ENCODE measurements at regions of chr11 and their contacts with region 1.

Region 1: GRCh38 chr11:65625628-65626342 is 10.2 kb downstream of the PCNX3 start:
- DNase-seq: peak in 8 of 9 donors; percentile 42 to 68 (median 54)
- ATAC-seq: peak; percentile 92
- H3K4me3 ChIP-seq: no peak overlapping the region
- H3K4me3 Mint-ChIP-seq: peak overlapping the region in 1 of 10 donors; percentile 41
- H3K27ac ChIP-seq: no peak overlapping the region
- H3K27ac Mint-ChIP-seq: peak overlapping the region in 4 of 9 donors; percentile 22 to 86 (median 68)
- H3K4me1 ChIP-seq: peaks cover 3 to 9% of the 10 kb centered on the region in 2 donors
- H3K4me1 Mint-ChIP-seq: peaks cover 4 to 13% (median 7%) of the 10 kb centered on the region in 7 donors
- H3K27me3 ChIP-seq: no peaks in the 10 kb centered on the region
- H3K27me3 Mint-ChIP-seq: no peaks in the 10 kb centered on the region

Region 2: DNA sequence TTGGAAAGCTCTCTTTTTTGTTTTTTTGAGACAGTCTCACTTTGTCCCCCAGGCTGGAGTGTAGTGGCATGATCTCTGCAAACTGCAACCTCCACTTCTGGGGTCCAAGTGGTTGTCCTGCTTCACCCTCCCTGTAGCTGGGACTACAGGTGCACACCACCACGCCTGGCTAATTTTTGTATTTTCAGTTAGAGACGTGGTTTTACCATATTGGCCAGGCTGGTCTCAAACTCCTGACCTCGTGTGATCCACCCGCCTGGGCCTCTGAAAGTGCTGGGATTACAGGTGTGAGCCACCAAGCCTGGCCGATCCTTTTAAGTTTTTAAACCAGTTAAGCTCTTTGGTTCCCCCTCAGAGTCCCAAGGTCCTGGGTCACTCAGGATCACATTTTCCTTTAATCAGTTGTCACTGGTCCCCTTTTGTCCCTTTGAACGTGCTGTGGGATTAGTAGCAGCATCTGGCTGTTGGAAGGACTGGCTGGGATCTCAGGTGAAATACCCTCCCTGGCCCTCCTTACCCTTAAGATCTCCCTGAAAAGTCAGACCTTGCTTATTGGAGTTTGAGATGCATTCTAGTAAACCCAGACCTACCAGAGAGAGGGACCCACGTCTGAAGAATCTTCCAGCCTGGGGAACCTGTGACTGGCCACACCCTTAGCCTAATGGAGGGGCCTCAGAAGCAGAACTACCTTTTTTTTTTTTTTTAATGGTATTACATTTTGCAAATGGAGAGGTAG is 118.8 kb before region 1 on chr11:
- CTCF ChIA-PET with region 1: no interaction called
- POLR2A ChIA-PET with region 1: no interaction called
- intact Hi-C with region 1: no loop called
- DNase-seq: peak in 7 of 9 donors; percentile 40 to 65 (median 58)
- ATAC-seq: peak; percentile 57
- H3K4me3 ChIP-seq: peak overlapping the region; percentile 99
- H3K4me3 Mint-ChIP-seq: no peak overlapping the region
- H3K27ac ChIP-seq: peak overlapping the region; percentile 99
- H3K27ac Mint-ChIP-seq: peak overlapping the region in 8 of 9 donors; percentile 78 to 92 (median 88)
- H3K4me1 ChIP-seq: peaks cover 35 to 38% of the 10 kb centered on the region in 2 donors
- H3K4me1 Mint-ChIP-seq: peaks cover 46 to 56% (median 49%) of the 10 kb centered on the region in 7 donors
- H3K27me3 ChIP-seq: no peaks in the 10 kb centered on the region
- H3K27me3 Mint-ChIP-seq: peaks cover 0 to 4% (median 0%) of the 10 kb centered on the region in 5 donors

Region 3: GRCh38 chr11:65637794-65638317 is 12.1 kb after region 1 on chr11 and contains the start of gene SIPA1:
- CTCF ChIA-PET with region 1: interaction called, 9 read pairs
- POLR2A ChIA-PET with region 1: interaction called, 22 read pairs
- intact Hi-C with region 1: no loop called
- DNase-seq: peak; percentile 57 to 93 (median 74)
- ATAC-seq: peak; percentile 62
- H3K4me3 ChIP-seq: peak within 1 kb of the TSS; percentile 90
- H3K4me3 Mint-ChIP-seq: peak within 1 kb of the TSS; percentile 89 to 99 (median 95)
- H3K27ac ChIP-seq: peak within 1 kb of the TSS; percentile 97
- H3K27ac Mint-ChIP-seq: peak within 1 kb of the TSS; percentile 76 to 100 (median 97)
- H3K4me1 ChIP-seq: peaks cover 45 to 58% of the 10 kb centered on the region in 2 donors
- H3K4me1 Mint-ChIP-seq: peaks cover 26 to 52% (median 47%) of the 10 kb centered on the region in 7 donors
- H3K27me3 ChIP-seq: no peaks in the 10 kb centered on the region
- H3K27me3 Mint-ChIP-seq: no peaks in the 10 kb centered on the region
- total RNA-seq, gene SIPA1: 145 to 249 (median 198) TPM

Region 4: DNA sequence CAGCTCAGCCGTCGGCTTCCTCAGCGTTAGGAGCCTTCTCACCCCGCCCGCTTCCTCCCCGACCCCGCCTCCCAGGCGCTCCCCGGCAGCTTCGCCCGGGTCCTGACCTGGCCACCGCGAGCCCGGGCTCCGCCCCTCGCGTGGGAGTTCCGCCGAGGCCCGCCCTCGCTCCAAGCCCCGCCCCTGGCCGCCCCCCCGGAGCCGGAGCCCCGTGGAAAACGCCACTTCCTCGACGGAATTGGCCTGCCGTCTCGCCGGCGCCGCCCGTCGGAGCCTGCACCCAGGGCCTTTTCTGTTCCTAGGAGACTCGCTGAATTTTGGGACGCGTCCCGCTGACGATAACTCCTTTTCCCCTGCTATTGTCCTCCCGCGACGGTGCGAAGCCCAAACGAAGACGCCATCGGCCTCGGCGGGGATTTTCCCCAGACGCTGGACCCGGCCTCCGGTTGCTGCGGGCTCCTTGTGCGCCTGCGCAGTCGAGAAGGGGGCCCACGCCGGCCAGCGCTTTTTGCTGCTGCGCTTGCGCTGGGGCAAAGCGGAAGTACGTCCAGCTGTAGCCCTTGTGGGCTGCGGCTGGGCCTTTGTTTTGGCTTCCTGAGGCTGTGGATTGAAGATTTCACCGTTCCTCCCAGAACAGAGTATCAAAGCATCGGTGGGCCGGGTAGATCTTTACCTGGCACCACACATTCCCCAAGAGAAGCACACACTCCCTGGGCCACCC is 26.9 kb after region 1 on chr11:
- CTCF ChIA-PET with region 1: interaction called, 4 read pairs
- POLR2A ChIA-PET with region 1: interaction called, 9 read pairs
- intact Hi-C with region 1: loop called in 1 of 2 experiments (anchors 1 kb)
- DNase-seq: peak; percentile 91 to 99 (median 95)
- ATAC-seq: peak; percentile 92
- H3K4me3 ChIP-seq: peak overlapping the region; percentile 58
- H3K4me3 Mint-ChIP-seq: peak overlapping the region; percentile 70 to 95 (median 90)
- H3K27ac ChIP-seq: peak overlapping the region; percentile 98
- H3K27ac Mint-ChIP-seq: peak overlapping the region; percentile 90 to 99 (median 98)
- H3K4me1 ChIP-seq: peaks cover 25% of the 10 kb centered on the region in 2 donors
- H3K4me1 Mint-ChIP-seq: peaks cover 36 to 59% (median 51%) of the 10 kb centered on the region in 7 donors
- H3K27me3 ChIP-seq: no peaks in the 10 kb centered on the region
- H3K27me3 Mint-ChIP-seq: no peaks in the 10 kb centered on the region

Region 5: GRCh38 chr11:65703846-65704245 is 78.1 kb after region 1 on chr11:
- CTCF ChIA-PET with region 1: interaction called, 13 read pairs
- POLR2A ChIA-PET with region 1: no interaction called
- intact Hi-C with region 1: loop called (anchors 1 kb)
- DNase-seq: no peak
- ATAC-seq: no peak
- H3K4me3 ChIP-seq: no peak overlapping the region
- H3K4me3 Mint-ChIP-seq: no peak overlapping the region
- H3K27ac ChIP-seq: no peak overlapping the region
- H3K27ac Mint-ChIP-seq: no peak overlapping the region
- H3K4me1 ChIP-seq: no peaks in the 10 kb centered on the region
- H3K4me1 Mint-ChIP-seq: peaks cover 0 to 7% (median 4%) of the 10 kb centered on the region in 7 donors
- H3K27me3 ChIP-seq: no peaks in the 10 kb centered on the region
- H3K27me3 Mint-ChIP-seq: peaks cover 0 to 19% (median 0%) of the 10 kb centered on the region in 5 donors

Region 6: DNA sequence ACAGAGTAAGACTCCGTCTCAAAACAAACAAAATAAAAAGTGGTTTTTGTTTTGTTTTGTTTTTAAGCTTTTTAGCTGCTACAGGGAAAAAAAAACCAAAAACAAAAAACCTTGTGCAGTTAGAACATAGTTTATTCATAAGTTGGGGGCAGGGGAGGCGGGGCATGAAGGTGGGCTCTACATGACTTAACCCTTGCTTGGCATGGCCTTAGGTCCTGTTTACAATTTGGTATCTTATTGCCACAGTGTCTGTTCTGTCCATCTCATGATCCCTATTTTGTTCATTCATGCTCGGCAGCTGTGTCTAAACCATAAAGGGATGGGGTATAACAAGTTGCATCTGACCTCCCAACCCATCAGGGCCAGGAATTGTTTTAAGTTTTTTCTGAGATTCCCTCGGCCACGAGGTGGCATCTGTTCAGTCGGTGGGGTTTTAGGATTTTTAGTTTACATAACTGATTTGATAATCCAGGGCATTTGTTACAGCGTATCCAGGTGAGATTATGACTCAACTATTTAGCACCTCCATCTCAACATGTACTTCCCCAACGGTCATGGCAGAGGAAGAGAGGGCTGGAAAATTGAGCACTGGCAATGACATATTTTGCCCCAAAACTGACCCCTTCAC is 148.1 kb after region 1 on chr11:
- CTCF ChIA-PET with region 1: interaction called, 4 read pairs
- POLR2A ChIA-PET with region 1: no interaction called
- intact Hi-C with region 1: loop called in 1 of 2 experiments (anchors 2 kb)
- DNase-seq: no peak
- ATAC-seq: no peak
- H3K4me3 ChIP-seq: no peak overlapping the region
- H3K4me3 Mint-ChIP-seq: no peak overlapping the region
- H3K27ac ChIP-seq: no peak overlapping the region
- H3K27ac Mint-ChIP-seq: no peak overlapping the region
- H3K4me1 ChIP-seq: peaks cover 0 to under 1% of the 10 kb centered on the region in 2 donors
- H3K4me1 Mint-ChIP-seq: peaks cover 11 to 20% (median 14%) of the 10 kb centered on the region in 7 donors
- H3K27me3 ChIP-seq: no peaks in the 10 kb centered on the region
- H3K27me3 Mint-ChIP-seq: no peaks in the 10 kb centered on the region

Region 7: DNA sequence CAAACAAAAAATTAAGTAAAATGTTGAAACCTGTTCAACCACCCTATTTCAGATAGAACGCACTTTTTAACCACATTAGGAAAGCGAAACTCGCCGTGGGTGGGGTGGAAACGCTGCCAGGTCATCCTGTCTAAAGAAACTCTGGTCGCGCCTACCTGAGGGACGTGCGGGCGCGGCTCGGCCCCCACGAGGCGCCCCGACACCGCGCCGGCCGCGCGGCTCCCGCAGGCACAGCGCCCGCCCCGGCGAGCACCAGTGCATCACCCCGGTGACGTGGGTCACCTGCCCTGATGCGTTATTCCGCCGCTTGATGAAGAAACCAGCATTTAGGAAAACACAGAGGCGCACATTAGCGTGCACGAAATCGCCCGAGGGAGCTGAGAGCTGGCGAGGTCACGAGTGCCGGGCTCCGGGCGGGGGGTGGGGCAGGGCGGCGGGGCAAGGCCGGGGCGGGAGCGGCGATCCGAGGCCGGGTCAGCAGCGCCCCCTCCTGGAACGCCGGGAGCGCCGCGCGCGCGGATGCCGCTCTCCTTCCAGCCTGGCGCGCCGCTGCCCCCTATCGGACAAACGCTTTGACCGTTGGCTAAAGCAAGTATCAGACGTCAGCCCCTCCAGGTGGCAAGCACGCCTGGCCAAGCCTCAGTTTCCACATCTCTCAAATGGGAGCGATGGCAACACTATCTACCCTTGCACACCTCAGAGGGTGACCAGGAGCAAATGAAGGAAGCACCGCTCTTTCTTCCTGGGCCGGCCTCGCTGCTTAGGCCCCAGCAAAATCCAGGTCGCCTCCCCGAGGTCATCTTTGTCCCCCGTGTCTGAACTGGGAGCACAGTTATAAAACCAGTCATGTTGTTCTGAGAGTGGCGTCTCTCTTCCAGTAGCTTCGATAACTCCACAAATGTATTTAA is 192.3 kb after region 1 on chr11:
- CTCF ChIA-PET with region 1: no interaction called
- POLR2A ChIA-PET with region 1: interaction called, 4 read pairs
- intact Hi-C with region 1: loop called (anchors 1 kb)
- DNase-seq: peak; percentile 79 to 98 (median 89)
- ATAC-seq: peak; percentile 98
- H3K4me3 ChIP-seq: peak overlapping the region; percentile 72
- H3K4me3 Mint-ChIP-seq: peak overlapping the region; percentile 74 to 90 (median 82)
- H3K27ac ChIP-seq: peak overlapping the region; percentile 75
- H3K27ac Mint-ChIP-seq: peak overlapping the region; percentile 56 to 90 (median 76)
- H3K4me1 ChIP-seq: peaks cover 7% of the 10 kb centered on the region in 2 donors
- H3K4me1 Mint-ChIP-seq: peaks cover 6 to 21% (median 17%) of the 10 kb centered on the region in 7 donors
- H3K27me3 ChIP-seq: no peaks in the 10 kb centered on the region
- H3K27me3 Mint-ChIP-seq: peaks cover 0 to 4% (median 0%) of the 10 kb centered on the region in 5 donors